ENCODE measurements at regions of chr19 and their contacts with region 1.

Region 1: GRCh38 chr19:7069042-7069903 is at the start of gene ZNF557:
- DNase-seq: peak; percentile 76
- ATAC-seq: peak; percentile 99
- H3K4me3 ChIP-seq: peak within 1 kb of the TSS; percentile 95 to 97
- H3K27ac ChIP-seq: peak within 1 kb of the TSS; percentile 88
- H3K4me1 ChIP-seq: no peaks in the 10 kb centered on the region
- H3K27me3 ChIP-seq: no peaks in the 10 kb centered on the region
- CTCF ChIP-seq: no peak
- total RNA-seq, gene ZNF557: 7.6 TPM

Region 2: DNA sequence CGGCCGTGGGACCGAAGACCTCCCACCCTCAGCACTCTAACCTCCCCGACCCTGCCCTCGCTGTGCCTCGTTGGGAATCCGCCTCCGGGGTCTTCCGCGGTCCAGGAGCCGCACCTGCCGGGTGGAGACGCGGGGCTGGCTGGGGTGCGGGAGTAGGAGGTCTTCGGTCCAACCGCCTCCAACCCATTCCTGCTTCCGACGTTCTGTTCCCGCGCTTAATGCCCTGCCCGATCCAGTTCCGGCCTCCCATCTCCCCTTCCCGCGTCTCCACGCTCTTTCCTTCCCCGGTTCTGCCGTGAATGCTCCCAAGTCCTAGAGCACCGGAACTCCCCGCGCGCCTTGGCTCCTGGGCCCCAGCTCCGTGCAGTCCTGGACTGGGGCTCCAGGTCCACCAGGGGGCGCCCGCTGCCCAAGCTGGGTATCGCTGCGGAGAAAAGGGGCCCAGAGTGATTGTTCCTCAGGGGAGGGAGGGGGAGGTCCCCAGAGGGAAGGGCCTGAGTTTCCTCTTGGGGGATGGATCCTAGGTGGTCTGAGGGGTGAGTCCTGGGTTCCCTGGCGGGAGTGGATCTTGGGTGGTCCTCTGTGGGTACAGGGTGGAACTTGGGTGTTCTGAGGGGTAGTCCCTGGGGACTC is 552.5 kb before region 1 on chr19:
- CTCF ChIA-PET with region 1: no interaction called
- POLR2A ChIA-PET with region 1: no interaction called
- in situ Hi-C with region 1: no loop called
- intact Hi-C with region 1: no loop called
- DNase-seq: no peak
- ATAC-seq: peak; percentile 94
- H3K4me3 ChIP-seq: peak overlapping the region; percentile 71 to 75
- H3K27ac ChIP-seq: peak overlapping the region; percentile 61; the same call in 1 of the 2 replicates
- H3K4me1 ChIP-seq: peaks cover 5% of the 10 kb centered on the region; the same call in 1 of the 2 replicates
- H3K27me3 ChIP-seq: no peaks in the 10 kb centered on the region
- CTCF ChIP-seq: peak; percentile 95

Region 3: GRCh38 chr19:6737284-6738046 is 331.8 kb before region 1 on chr19 and contains the start of gene GPR108:
- CTCF ChIA-PET with region 1: interaction called, 11 read pairs
- POLR2A ChIA-PET with region 1: no interaction called
- in situ Hi-C with region 1: no loop called
- intact Hi-C with region 1: no loop called
- DNase-seq: peak; percentile 99
- ATAC-seq: peak; percentile 81
- H3K4me3 ChIP-seq: peak within 1 kb of the TSS; percentile 88 to 92
- H3K27ac ChIP-seq: peak within 1 kb of the TSS; percentile 92
- H3K4me1 ChIP-seq: peaks cover 15% of the 10 kb centered on the region
- H3K27me3 ChIP-seq: no peaks in the 10 kb centered on the region
- CTCF ChIP-seq: no peak
- total RNA-seq, gene GPR108: 43.0 TPM

Region 4: DNA sequence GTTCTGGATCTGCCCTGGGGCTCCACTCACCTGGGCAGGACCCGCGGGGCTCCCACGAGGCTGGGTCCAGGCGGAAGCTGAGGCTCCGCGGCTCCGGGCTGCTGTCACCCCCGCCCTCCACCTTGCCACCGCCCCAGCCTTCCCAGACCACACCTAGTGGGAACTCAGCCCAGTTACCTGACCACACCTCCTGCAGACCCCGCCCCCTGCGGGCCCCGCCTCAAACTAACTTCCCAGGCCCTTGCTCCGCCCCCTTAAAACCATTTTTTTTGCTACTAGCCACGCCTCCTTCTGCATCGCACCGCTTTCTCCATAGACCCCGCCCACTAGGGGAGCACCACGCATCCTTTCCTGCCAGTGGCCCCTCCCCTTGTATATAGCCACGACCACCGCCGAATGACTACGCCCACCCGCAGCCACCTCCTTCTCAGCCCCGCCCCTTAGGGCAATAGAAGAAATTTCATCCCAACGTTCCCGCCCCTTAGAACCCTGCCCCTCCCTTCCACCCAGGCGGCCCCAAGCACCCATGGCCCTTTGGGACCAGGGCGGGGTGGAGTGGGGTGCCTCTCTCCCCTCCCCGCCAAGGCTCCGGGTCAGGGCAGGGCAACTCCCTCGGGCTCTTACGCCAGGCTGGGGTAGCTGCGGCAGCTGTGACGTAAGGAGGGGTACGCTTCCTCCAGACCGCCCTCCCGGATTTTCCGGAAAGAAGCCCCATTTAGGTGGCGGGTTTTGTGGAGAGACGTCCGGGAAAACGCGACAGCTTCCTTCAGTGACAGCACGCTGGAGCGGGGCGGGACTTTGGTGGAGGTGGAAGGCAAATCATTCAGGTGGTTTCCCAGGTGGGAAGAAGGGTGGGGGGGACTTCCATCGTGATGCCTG is 301.7 kb before region 1 on chr19 and contains the start of gene SH2D3A:
- CTCF ChIA-PET with region 1: no interaction called
- POLR2A ChIA-PET with region 1: interaction called, 23 read pairs
- in situ Hi-C with region 1: no loop called
- intact Hi-C with region 1: no loop called
- DNase-seq: no peak
- ATAC-seq: peak; percentile 73
- H3K4me3 ChIP-seq: peak within 1 kb of the TSS; percentile 50 to 64
- H3K27ac ChIP-seq: peak within 1 kb of the TSS; percentile 39; the same call in 1 of the 2 replicates
- H3K4me1 ChIP-seq: 0 out of 2 replicates have a peak, but pooled peaks cover 2% of the 10 kb centered on the region
- H3K27me3 ChIP-seq: no peaks in the 10 kb centered on the region
- CTCF ChIP-seq: no peak
- total RNA-seq, gene SH2D3A: 2.2 TPM